PC-3 (cell line): ENCODE measurements at regions of chrX and their contacts with region 1.

Region 1: DNA sequence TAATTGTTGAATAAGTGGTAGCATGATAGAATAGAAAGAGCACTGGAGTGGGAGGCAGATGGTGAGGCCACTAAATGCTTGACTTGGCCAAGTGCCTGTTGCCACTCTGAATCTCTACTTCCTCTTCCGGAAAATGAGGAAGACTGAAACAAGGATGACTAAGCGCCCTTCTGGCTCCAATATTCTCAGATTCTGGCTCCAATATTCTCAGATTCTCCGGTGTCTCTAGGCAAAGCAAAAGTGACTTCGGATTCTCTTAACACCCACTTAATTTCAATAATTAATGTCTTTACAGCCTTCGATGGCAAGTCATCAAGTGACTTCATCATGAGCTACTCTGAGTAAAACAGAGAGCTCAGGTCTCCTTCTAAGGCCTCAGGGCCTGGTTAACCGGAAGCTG is 402.2 kb upstream of the FGF13 start:
- DNase-seq: peak; percentile 70
- ATAC-seq: peak; percentile 46
- H3K4me3 ChIP-seq: no peak overlapping the region
- H3K27ac ChIP-seq: peak overlapping the region; percentile 84
- H3K4me1 ChIP-seq: peaks cover 25% of the 10 kb centered on the region
- H3K27me3 ChIP-seq: no peaks in the 10 kb centered on the region
- CTCF ChIP-seq: no peak

Region 2: GRCh38 chrX:139052461-139052860 is 61.2 kb before region 1 on chrX:
- CTCF ChIA-PET with region 1: no interaction called
- POLR2A ChIA-PET with region 1: no interaction called
- intact Hi-C with region 1: loop called (anchors 2 kb)
- DNase-seq: no peak
- ATAC-seq: no peak
- H3K4me3 ChIP-seq: no peak overlapping the region
- H3K27ac ChIP-seq: no peak overlapping the region
- H3K4me1 ChIP-seq: no peaks in the 10 kb centered on the region
- H3K27me3 ChIP-seq: no peaks in the 10 kb centered on the region
- CTCF ChIP-seq: no peak